ENCODE measurements at regions of chr15 and their contacts with region 1.

Region 1: GRCh38 chr15:52679232-52680040 is at the start of gene ATOSA:
- H3K4me3 Mint-ChIP-seq: peak within 1 kb of the TSS; percentile 98
- H3K27ac Mint-ChIP-seq: peak within 1 kb of the TSS; percentile 98
- H3K4me1 Mint-ChIP-seq: peaks cover 25% of the 10 kb centered on the region
- H3K27me3 Mint-ChIP-seq: peaks cover 11% of the 10 kb centered on the region

Region 2: GRCh38 chr15:52427804-52428203 is 251.6 kb before region 1 on chr15:
- intact Hi-C with region 1: no loop called
- H3K4me3 Mint-ChIP-seq: no peak overlapping the region
- H3K27ac Mint-ChIP-seq: no peak overlapping the region
- H3K4me1 Mint-ChIP-seq: peaks cover 4% of the 10 kb centered on the region
- H3K27me3 Mint-ChIP-seq: no peaks in the 10 kb centered on the region

Region 3: DNA sequence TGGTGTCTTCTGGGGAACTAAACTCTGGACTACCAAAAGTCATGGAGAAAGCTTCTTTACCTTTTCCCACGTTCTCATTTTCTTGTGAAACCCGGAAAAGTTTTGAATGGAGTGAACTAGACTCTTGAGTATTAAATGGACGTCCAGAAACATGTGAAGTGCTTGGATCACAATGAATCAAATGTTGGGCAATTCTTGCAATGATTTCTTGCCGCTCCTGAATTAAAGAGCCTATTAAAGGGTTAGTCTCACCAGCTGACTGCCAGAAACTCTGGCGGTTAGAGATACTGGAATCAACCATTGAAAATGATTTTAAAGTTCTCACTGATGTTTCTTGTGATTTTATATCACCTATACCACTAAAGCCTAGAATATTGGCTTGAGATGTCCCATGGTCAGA is 69.8 kb before region 1 on chr15:
- intact Hi-C with region 1: no loop called
- H3K4me3 Mint-ChIP-seq: no peak overlapping the region
- H3K27ac Mint-ChIP-seq: no peak overlapping the region
- H3K4me1 Mint-ChIP-seq: peaks cover 5% of the 10 kb centered on the region
- H3K27me3 Mint-ChIP-seq: no peaks in the 10 kb centered on the region

Region 4: GRCh38 chr15:52714968-52715367 is 35.5 kb after region 1 on chr15:
- intact Hi-C with region 1: loop called (anchors 5 kb)
- H3K4me3 Mint-ChIP-seq: no peak overlapping the region
- H3K27ac Mint-ChIP-seq: no peak overlapping the region
- H3K4me1 Mint-ChIP-seq: peaks cover 44% of the 10 kb centered on the region
- H3K27me3 Mint-ChIP-seq: peaks cover 4% of the 10 kb centered on the region